Mammary epithelial cell (primary cell): ENCODE measurements at regions of chr19 and their contacts with region 1.

Region 1: DNA sequence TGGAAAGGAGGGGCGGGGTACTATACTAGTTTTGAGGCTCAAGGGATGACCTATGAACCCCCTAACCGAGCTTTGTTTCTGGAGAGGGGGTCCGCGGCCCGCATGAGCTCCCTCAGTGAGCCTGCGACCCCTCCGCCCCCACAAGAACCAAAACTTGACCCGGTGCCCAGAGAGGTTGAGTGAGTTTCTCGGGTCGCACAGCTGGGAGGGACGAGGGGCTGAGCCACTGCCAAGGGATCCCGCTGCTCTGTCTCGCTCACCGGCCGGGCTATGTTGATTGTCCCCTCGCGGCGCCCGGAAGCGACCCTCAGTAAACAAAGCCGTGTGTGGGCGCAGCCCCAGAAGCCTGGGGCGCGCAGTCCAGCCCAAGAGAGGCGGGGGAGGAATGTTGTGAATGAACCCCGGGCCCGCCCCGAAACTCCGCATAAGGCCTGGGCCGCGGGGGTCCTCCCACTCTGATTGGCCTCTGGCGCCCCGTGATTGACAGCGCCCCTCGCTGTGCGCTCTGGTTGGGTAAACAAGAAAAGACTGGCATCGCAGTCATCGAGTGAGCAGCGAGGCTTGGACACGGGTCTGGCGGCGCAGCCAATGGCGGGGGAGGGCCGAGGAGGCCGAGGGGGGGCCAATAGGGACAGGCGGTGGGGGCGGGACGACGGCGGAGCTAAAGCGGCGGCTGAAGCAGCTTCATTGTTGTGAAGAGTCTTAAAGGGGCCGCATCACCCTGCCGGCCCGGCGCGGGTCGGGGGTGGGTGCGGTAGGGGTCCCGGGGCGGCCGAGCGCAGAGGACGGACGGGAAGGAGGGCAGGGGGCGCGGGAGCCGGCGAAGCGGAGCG is at the start of gene ZSWIM4:
- DNase-seq: peak; percentile 100
- H3K4me3 ChIP-seq: peak within 1 kb of the TSS; percentile 79 to 87 (median 79)
- H3K27ac ChIP-seq: peak within 1 kb of the TSS; percentile 96
- H3K4me1 ChIP-seq: peaks cover 23% of the 10 kb centered on the region
- H3K27me3 ChIP-seq: no peaks in the 10 kb centered on the region
- CTCF ChIP-seq: no peak
- total RNA-seq, gene ZSWIM4: 3.2 to 5.4 TPM

Region 2: GRCh38 chr19:13689085-13689484 is 105.9 kb before region 1 on chr19:
- CTCF ChIA-PET with region 1: no interaction called
- dilution Hi-C with region 1: no loop called
- in situ Hi-C with region 1: no loop called
- intact Hi-C with region 1: no loop called
- DNase-seq: no peak
- H3K4me3 ChIP-seq: no peak overlapping the region
- H3K27ac ChIP-seq: no peak overlapping the region
- H3K4me1 ChIP-seq: peaks cover 11% of the 10 kb centered on the region
- H3K27me3 ChIP-seq: no peaks in the 10 kb centered on the region
- CTCF ChIP-seq: no peak

Region 3: DNA sequence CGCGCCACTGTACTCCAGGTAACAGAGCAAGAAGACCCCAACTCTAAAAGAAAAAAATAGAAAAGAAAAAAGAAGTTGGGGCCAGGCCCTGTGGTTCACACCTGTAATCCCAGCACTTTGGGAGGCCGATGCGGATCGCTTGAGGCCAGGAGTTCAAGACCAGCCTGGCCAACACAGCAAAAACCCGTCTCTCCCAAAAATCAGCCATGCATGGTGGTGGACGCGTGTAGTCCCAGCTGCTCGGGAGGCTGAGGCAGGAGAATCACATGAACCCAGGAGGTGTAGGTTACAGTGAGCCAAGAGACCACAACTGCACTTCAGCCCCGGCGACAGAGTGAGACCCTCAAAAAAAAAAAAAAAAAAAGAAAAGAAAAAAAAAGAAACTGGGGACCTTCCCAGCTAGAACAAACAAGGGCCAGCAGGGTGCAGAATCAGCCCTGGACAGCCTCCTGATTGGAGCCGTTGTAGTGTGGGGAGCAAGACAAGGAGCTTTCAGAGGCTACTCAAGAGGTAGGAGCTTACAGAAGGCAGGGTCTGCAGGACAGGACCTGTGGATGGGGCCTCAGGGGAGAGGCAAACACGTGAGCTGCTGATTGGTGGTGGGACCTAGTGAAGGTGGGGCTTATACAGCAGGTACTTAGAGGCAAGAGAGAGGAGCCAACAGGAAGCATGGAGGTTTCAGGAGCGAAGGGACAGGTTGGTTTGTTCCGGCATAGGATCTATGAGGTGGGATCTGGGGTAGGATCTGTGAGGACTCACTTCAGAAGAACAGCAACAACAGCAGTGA is 32.5 kb after region 1 on chr19:
- CTCF ChIA-PET with region 1: no interaction called
- dilution Hi-C with region 1: loop called (anchors 5 kb)
- in situ Hi-C with region 1: no loop called
- intact Hi-C with region 1: loop called (anchors 1 kb)
- DNase-seq: no peak
- H3K4me3 ChIP-seq: no peak overlapping the region
- H3K27ac ChIP-seq: no peak overlapping the region
- H3K4me1 ChIP-seq: no peaks in the 10 kb centered on the region
- H3K27me3 ChIP-seq: no peaks in the 10 kb centered on the region
- CTCF ChIP-seq: no peak